HEK293 (cell line): ENCODE measurements at regions of chr9 and their contacts with region 1.

Region 1: GRCh38 chr9:127503947-127504782 is 52.9 kb downstream of the LRSAM1 start:
- H3K4me3 ChIP-seq: no peak overlapping the region
- H3K27ac ChIP-seq: no peak overlapping the region
- H3K4me1 ChIP-seq: no peaks in the 10 kb centered on the region
- CTCF ChIP-seq: peak; percentile 79

Region 2: GRCh38 chr9:127531454-127532339 is 27.5 kb after region 1 on chr9:
- CTCF ChIA-PET with region 1: interaction called, 10 read pairs
- POLR2A ChIA-PET with region 1: no interaction called
- H3K4me3 ChIP-seq: no peak overlapping the region
- H3K27ac ChIP-seq: no peak overlapping the region
- H3K4me1 ChIP-seq: no peaks in the 10 kb centered on the region
- CTCF ChIP-seq: no peak